Activated naive CD4-positive, alpha-beta T cell treated with anti-CD3 and anti-CD28 coated beads, Interleukin-2, amount 10 ng/mL, durations not matched to agents 7 days and 5 days (primary cell): ENCODE measurements at regions of chr1 and their contacts with region 1.

Region 1: DNA sequence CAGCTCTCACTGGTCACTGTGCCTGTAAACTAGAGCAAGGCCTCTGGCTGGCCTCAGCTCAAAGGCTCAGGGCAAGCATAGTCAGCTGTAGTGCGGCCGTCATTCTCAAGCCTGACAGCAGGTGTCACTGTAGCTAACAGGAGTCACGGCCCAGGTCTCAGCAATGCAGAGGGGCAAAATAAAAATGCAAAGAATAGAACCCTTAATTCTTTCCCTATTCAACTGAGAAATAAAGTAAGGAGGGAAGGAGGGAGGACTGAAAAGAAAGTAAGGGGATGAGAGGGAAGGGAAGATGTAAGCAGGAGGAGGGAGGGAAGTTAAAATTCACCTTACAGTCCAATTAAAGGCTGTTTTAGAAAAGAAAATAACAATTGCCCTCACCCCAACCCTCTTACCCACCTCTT is 106.1 kb downstream of the KIAA0319L start:
- DNase-seq: peak; percentile 87
- H3K4me3 Mint-ChIP-seq: no peak overlapping the region
- H3K27ac Mint-ChIP-seq: peak overlapping the region; percentile 80
- H3K4me1 Mint-ChIP-seq: peaks cover 23% of the 10 kb centered on the region
- H3K27me3 Mint-ChIP-seq: no peaks in the 10 kb centered on the region

Region 2: DNA sequence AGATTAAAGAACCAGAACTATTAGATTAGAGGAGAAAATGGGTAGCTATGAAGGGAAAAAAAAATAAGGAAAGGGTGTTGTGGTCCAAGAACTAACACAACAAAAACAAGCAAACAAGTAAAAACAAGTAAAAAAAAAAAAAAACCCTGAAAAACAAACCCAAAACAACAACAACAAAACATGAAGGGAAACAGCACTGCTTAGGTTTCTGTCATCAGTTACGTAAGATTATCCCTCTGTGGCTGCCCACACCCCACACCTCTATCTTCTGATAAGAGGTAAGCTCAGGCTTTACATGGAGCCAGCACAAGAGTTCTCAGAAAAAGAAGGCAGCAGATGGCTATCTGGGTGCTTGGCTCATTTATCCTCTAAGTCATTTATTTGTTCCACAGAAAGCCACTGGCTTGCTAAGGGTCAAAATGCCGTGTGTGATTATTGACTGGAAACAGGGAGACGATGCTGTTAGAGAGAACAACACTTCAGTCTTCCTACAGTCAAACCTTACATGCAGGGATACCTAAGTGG is 48.6 kb after region 1 on chr1:
- CTCF ChIA-PET with region 1: interaction called, 26 read pairs
- DNase-seq: peak; percentile 67
- H3K4me3 Mint-ChIP-seq: no peak overlapping the region
- H3K27ac Mint-ChIP-seq: peak overlapping the region; percentile 80
- H3K4me1 Mint-ChIP-seq: peaks cover 35% of the 10 kb centered on the region
- H3K27me3 Mint-ChIP-seq: no peaks in the 10 kb centered on the region

Region 3: DNA sequence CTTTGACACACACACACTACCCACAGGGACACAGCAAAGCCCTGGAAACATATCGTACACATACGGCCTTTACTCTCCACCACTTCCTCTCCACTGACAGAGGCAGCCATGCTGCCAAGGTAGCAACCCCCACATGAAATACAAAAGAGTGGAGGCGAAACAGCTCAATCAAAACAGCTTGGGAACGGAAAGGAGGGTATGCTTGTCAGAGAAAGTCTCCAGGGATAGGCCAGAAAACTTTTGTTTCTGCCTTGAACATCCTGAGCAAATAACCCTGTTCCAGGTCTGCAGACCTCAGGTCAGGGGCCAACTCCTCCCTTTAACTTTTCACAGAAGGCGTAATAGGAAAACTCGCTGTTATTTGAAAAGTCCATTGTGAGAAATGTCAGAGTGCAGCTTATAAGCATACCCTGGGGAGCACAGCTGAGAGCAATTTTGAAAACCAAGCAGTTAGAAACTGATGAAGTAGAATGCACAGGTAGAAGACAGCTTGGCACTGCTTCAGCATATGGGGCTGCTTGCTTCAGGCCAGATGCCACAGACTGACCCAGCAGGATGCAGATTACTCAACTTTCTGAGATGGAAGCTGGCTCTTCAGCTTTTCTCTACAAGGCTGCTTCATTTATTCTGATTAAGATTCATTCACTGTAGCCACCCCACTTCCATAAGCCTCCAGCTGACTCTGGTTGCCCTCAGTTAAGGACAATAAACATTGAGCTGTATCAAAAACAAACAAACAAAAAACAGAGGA is 88.1 kb after region 1 on chr1:
- CTCF ChIA-PET with region 1: interaction called, 57 read pairs
- DNase-seq: peak; percentile 64
- H3K4me3 Mint-ChIP-seq: peak overlapping the region; percentile 61
- H3K27ac Mint-ChIP-seq: peak overlapping the region; percentile 92
- H3K4me1 Mint-ChIP-seq: peaks cover 57% of the 10 kb centered on the region
- H3K27me3 Mint-ChIP-seq: no peaks in the 10 kb centered on the region

Region 4: GRCh38 chr1:35557292-35558063 is 106.4 kb after region 1 on chr1 and contains the starts of genes KIAA0319L and NCDN:
- CTCF ChIA-PET with region 1: interaction called, 85 read pairs
- DNase-seq: peak; percentile 98
- H3K4me3 Mint-ChIP-seq: peak within 1 kb of the TSS; percentile 95
- H3K27ac Mint-ChIP-seq: peak within 1 kb of the TSS; percentile 97
- H3K4me1 Mint-ChIP-seq: peaks cover 50% of the 10 kb centered on the region
- H3K27me3 Mint-ChIP-seq: no peaks in the 10 kb centered on the region

Region 5: GRCh38 chr1:35577071-35577998 is 126.2 kb after region 1 on chr1:
- CTCF ChIA-PET with region 1: interaction called, 11 read pairs
- DNase-seq: peak; percentile 84
- H3K4me3 Mint-ChIP-seq: peak overlapping the region; percentile 68
- H3K27ac Mint-ChIP-seq: peak overlapping the region; percentile 62
- H3K4me1 Mint-ChIP-seq: peaks cover 28% of the 10 kb centered on the region
- H3K27me3 Mint-ChIP-seq: peaks cover 63% of the 10 kb centered on the region